ENCODE measurements at regions of chr4 and their contacts with region 1.

Region 1: DNA sequence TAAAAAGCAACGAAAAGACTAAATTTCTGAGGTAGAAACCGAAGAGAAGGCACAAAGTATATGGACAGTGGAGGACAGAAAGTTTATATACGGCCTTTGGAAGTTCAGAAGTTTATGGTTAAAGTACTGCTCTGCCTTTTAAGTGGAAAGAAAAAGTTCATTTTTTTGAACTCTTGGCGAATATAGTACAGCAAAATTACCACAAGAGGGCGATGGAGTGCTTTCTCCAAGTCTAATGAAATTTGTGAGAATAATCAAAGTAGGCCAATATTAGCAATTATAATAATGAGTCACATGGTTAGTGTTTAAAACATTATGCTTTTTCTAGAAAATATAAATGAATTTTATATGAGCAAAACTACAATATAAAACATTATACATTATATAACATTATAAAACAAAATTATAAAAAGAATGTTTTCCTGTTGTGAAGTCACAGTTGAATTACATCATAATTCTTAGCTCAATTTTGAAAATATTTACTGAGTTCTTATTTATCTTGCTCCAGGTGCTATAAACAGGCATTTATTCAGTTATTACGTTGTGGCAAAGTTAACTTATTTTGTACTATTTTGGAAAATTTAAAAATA is 136.2 kb upstream of the BMPR1B start:
- DNase-seq: peak; percentile 66
- H3K4me3 Mint-ChIP-seq: no peak overlapping the region
- H3K27ac Mint-ChIP-seq: no peak overlapping the region
- H3K4me1 Mint-ChIP-seq: no peaks in the 10 kb centered on the region
- H3K27me3 Mint-ChIP-seq: no peaks in the 10 kb centered on the region

Region 2: GRCh38 chr4:95124906-95125504 is 503.4 kb after region 1 on chr4:
- intact Hi-C with region 1: loop called (anchors 10 kb)
- DNase-seq: no peak
- H3K4me3 Mint-ChIP-seq: no peak overlapping the region
- H3K27ac Mint-ChIP-seq: no peak overlapping the region
- H3K4me1 Mint-ChIP-seq: no peaks in the 10 kb centered on the region
- H3K27me3 Mint-ChIP-seq: peaks cover 6% of the 10 kb centered on the region